Caco-2 (cell line): ENCODE measurements at regions of chr6 and their contacts with region 1.

Region 1: GRCh38 chr6:23547701-23548161 is 578.3 kb upstream of the NRSN1 start:
- DNase-seq: peak; percentile 64 to 70
- H3K4me3 ChIP-seq: no peak overlapping the region
- H3K4me3 Mint-ChIP-seq: peak overlapping the region; percentile 3
- H3K27ac Mint-ChIP-seq: peak overlapping the region; percentile 61
- H3K4me1 ChIP-seq: peaks cover 23% of the 10 kb centered on the region
- H3K4me1 Mint-ChIP-seq: peaks cover 14% of the 10 kb centered on the region
- H3K27me3 ChIP-seq: no peaks in the 10 kb centered on the region
- H3K27me3 Mint-ChIP-seq: no peaks in the 10 kb centered on the region
- CTCF ChIP-seq: peak; percentile 35 to 66

Region 2: GRCh38 chr6:23601811-23602340 is 54.1 kb after region 1 on chr6:
- CTCF ChIA-PET with region 1: no interaction called
- POLR2A ChIA-PET with region 1: no interaction called
- intact Hi-C with region 1: no loop called
- DNase-seq: no peak
- H3K4me3 ChIP-seq: no peak overlapping the region
- H3K4me3 Mint-ChIP-seq: no peak overlapping the region
- H3K27ac Mint-ChIP-seq: no peak overlapping the region
- H3K4me1 ChIP-seq: no peaks in the 10 kb centered on the region
- H3K4me1 Mint-ChIP-seq: no peaks in the 10 kb centered on the region
- H3K27me3 ChIP-seq: no peaks in the 10 kb centered on the region
- H3K27me3 Mint-ChIP-seq: peaks cover 5% of the 10 kb centered on the region
- CTCF ChIP-seq: no peak

Region 3: GRCh38 chr6:23647045-23647444 is 99.3 kb after region 1 on chr6:
- CTCF ChIA-PET with region 1: no interaction called
- POLR2A ChIA-PET with region 1: no interaction called
- intact Hi-C with region 1: no loop called
- DNase-seq: no peak
- H3K4me3 ChIP-seq: no peak overlapping the region
- H3K4me3 Mint-ChIP-seq: no peak overlapping the region
- H3K27ac Mint-ChIP-seq: no peak overlapping the region
- H3K4me1 ChIP-seq: no peaks in the 10 kb centered on the region
- H3K4me1 Mint-ChIP-seq: no peaks in the 10 kb centered on the region
- H3K27me3 ChIP-seq: no peaks in the 10 kb centered on the region
- H3K27me3 Mint-ChIP-seq: no peaks in the 10 kb centered on the region
- CTCF ChIP-seq: no peak

Region 4: GRCh38 chr6:23659125-23659524 is 111.4 kb after region 1 on chr6:
- CTCF ChIA-PET with region 1: no interaction called
- POLR2A ChIA-PET with region 1: no interaction called
- intact Hi-C with region 1: loop called (anchors 1 kb)
- DNase-seq: peak; percentile 46 to 53
- H3K4me3 ChIP-seq: no peak overlapping the region
- H3K4me3 Mint-ChIP-seq: no peak overlapping the region
- H3K27ac Mint-ChIP-seq: no peak overlapping the region
- H3K4me1 ChIP-seq: 0 out of 2 replicates have a peak, but pooled peaks cover 4% of the 10 kb centered on the region
- H3K4me1 Mint-ChIP-seq: peaks cover 7% of the 10 kb centered on the region
- H3K27me3 ChIP-seq: no peaks in the 10 kb centered on the region
- H3K27me3 Mint-ChIP-seq: no peaks in the 10 kb centered on the region
- CTCF ChIP-seq: peak; percentile 56 to 74